ENCODE measurements at regions of chr19 and their contacts with region 1.

Region 1: GRCh38 chr19:10194500-10195289 is at the start of gene DNMT1:
- DNase-seq: peak; percentile 77 to 87
- ATAC-seq: peak; percentile 87 to 92
- H3K4me3 ChIP-seq: peak within 1 kb of the TSS; percentile 77 to 100 (median 86)
- H3K27ac ChIP-seq: peak within 1 kb of the TSS; percentile 77 to 95 (median 86)
- H3K4me1 ChIP-seq: peaks cover 11 to 12% of the 10 kb centered on the region in 2 donors
- H3K27me3 ChIP-seq: no peaks in the 10 kb centered on the region
- CTCF ChIP-seq: no peak
- POLR2A ChIP-seq: peak; percentile 53 to 72
- total RNA-seq, gene DNMT1: 11.5 to 43.0 (median 17.7) TPM

Region 2: DNA sequence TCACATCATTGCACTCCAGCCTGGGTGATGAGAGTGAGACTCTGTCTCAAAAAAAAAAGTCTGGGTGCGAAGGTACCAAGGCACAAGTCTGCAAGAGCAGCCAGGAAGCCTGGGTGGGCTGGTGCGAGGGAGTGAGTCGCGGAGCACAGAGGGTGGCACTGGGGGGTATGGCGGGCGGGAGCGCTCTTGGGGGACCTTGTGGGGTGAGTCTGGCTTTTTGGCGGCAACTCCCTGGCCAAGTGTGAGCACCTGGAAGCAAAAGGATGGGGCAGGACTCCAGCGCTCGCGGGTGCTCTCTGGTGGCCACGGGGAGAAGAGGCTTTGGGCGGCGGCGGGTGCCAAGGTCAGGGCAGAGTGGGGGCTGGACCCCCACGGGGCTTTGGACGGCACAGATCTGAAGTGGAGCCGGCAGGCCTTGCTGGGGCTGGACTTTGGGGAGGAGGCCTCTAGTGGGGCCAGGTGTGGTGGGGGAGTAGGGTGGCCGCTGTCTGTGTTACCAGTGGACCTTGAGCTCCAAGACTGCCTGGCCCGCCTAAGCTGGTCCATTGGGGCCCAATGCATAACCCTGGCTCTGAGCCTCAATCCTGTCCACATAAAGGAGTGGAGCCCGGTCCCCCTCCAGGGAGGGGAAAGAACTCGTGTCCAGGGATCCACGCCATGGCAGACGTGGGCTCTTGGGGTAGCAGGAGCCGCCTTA is 81.7 kb before region 1 on chr19:
- in situ Hi-C with region 1: no loop called
- intact Hi-C with region 1: loop called (anchors 10 kb)
- DNase-seq: no peak
- ATAC-seq: no peak
- H3K4me3 ChIP-seq: no peak overlapping the region
- H3K27ac ChIP-seq: peak overlapping the region in 1 of 4 donors; percentile 27
- H3K4me1 ChIP-seq: peaks cover 4 to 17% of the 10 kb centered on the region in 2 donors
- H3K27me3 ChIP-seq: no peaks in the 10 kb centered on the region
- CTCF ChIP-seq: peak in 4 of 5 experiments; percentile 27 to 54 (median 38)
- POLR2A ChIP-seq: no peak

Region 3: DNA sequence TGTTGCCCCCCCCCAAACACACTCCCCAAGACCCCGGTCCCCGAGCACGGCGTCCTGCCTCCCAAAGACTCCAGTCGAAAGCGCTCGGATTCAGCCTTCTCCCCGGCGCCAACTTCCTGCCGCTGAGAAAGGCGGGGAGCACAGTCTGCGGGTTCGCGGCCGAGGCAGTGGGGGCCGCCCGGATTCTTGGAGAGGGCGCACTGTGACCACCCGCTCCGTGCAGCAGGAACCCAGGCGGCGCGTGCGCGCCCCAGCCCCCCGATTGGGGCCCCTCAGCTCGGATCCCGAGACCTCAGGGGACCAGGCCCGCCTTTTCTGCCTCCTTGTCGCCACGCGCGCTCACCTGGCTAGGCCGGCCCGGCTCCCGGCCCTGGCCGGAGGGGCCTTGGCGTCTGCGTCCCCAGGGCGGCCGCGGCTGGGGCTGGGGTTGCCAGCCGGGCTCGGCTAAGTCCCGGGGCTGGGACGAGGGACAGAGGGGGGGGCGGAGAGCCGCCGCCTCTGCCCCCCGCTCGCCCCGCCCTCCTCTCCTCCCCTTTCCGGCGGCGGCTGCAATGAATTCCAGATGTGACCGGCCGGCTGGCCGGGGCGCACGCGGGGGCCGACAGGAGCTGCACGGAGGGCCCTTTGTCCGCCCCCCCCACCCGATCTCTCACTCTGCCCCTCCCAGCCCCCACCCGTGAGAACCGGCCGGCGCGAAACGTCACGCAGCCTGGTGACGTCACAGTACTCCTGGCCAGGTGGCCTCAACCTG is 36.3 kb after region 1 on chr19 and contains the start of gene S1PR2:
- in situ Hi-C with region 1: no loop called
- intact Hi-C with region 1: loop called (anchors 5 kb)
- DNase-seq: peak; percentile 20 to 38
- ATAC-seq: peak in 1 of 2 donors; percentile 25
- H3K4me3 ChIP-seq: peak within 1 kb of the TSS; percentile 69 to 87 (median 76)
- H3K27ac ChIP-seq: peak within 1 kb of the TSS; percentile 70 to 84 (median 79)
- H3K4me1 ChIP-seq: peaks cover 3 to 13% of the 10 kb centered on the region in 2 donors
- H3K27me3 ChIP-seq: peaks cover 8 to 25% (median 19%) of the 10 kb centered on the region in 3 donors
- CTCF ChIP-seq: no peak
- POLR2A ChIP-seq: peak in 1 of 2 donors; percentile 6
- total RNA-seq, gene S1PR2: 0.56 to 2.2 (median 1.1) TPM

Region 4: DNA sequence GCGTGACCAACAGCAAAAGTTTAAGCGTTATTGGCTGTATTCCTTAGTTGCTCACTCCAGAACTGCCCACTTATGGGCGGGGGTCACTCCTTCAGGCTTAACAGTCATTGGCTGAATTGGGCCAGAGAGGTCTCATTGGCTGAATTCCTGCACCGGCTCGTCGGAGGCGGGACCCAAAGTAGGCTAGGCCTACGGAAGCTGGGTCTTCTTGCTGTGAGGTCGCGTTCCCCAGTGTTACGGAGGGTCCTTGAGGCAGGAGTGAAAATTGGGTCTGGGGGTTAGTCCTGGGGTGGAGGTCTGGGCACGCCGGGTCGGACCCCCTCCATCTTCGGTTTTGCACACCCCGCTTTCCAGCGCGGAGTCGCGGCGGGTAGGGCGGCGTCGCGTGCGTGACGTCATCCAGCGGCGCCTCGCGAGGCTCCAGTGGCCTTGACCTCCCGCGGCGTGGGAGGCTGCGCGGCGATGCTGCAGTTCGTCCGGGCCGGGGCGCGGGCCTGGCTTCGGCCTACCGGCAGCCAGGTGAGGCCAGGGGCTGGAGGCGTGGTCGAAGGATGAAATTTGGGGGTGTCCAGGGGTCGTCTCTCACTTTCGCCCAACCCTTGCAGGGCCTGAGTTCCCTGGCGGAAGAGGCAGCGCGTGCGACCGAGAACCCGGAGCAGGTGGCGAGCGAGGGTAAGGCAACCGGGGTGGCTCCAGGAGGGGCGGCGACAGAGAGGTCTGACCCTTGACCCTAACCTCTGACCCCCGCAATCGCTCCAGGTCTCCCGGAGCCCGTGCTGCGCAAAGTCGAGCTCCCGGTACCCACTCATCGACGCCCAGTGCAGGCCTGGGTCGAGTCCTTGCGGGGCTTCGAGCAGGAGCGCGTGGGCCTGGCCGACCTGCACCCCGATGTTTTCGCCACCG is 57.3 kb after region 1 on chr19 and contains the start of gene MRPL4:
- in situ Hi-C with region 1: no loop called
- intact Hi-C with region 1: loop called (anchors 2 kb)
- DNase-seq: peak; percentile 95 to 97
- ATAC-seq: peak; percentile 99 to 100
- H3K4me3 ChIP-seq: peak within 1 kb of the TSS; percentile 77 to 97 (median 89)
- H3K27ac ChIP-seq: peak within 1 kb of the TSS; percentile 82 to 87 (median 86)
- H3K4me1 ChIP-seq: peaks cover 7 to 15% of the 10 kb centered on the region in 2 donors
- H3K27me3 ChIP-seq: no peaks in the 10 kb centered on the region
- CTCF ChIP-seq: peak in 2 of 5 experiments; percentile 44 to 57
- POLR2A ChIP-seq: peak; percentile 63 to 73
- total RNA-seq, gene MRPL4: 68.3 to 112 (median 84.4) TPM